Activated naive CD4-positive, alpha-beta T cell treated with anti-CD3 and anti-CD28 coated beads, Interleukin-2, amount 10 ng/mL, durations not matched to agents 7 days and 5 days (primary cell): ENCODE measurements at regions of chr4 and their contacts with region 1.

Region 1: DNA sequence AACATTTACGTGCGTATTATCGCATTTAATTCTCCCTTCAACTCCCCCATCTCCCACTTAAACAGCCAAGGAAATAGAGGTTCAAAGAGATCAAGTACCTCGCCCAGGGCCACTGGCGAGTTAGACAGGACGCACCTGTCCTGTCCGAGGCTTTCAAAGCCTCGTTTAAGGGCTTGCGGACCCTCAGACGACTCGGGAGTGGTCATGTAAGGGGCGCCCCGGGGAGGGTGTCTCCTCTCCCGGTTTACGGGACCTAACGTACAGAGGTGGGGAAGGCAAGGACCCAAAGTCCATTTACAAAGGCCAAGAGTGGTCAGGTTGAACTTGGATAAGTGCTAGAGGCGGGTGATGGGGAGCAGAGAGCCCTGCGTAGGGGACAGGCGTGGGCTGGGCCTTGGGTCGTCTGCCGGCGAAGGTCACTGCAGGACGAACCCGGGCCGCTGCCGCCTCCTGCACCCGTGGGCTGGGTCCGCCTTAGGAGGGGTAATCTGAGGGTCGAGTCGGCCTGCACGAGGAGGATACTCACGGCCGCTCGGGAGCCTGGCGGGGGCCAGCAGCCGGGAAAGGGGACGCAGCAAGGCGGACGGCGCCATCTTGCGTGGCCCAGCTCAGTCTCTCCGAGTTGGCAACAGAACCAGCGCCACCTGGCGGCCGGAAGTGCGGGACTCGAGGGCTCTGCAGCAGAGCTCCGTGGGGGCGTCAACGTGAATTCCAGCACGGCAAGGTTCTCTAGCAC is 5.9 kb upstream of the NAA15 start:
- DNase-seq: peak; percentile 99
- H3K4me3 Mint-ChIP-seq: peak overlapping the region; percentile 82
- H3K27ac Mint-ChIP-seq: peak overlapping the region; percentile 91
- H3K4me1 Mint-ChIP-seq: peaks cover 34% of the 10 kb centered on the region
- H3K27me3 Mint-ChIP-seq: no peaks in the 10 kb centered on the region

Region 2: DNA sequence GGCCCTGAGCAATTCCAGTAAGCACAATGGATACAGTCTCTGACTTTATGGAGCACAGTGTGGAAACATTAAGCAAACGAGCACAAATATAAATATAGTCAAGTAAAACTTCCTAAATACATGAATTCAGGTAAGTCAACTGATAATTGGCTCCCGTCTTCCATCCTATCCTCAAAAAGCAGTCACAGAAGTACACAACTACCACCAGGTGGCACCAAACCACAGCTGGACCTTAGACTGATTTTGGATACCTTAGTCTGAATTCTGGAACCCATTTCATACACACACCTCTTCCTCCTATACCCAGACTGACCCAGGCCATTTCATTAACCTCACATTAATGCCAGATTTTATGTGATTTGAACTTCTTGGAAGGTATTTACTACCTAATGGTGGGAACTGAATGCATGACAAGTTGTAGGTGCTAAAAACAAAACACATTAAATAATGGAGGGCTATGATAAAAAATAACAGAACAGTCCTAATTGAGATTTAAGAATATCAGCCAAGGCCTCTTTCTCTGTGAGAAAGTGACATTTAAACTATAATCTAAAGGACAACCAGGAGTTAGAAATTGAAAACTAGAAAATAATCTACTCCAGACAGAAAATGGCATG is 195.9 kb before region 1 on chr4:
- CTCF ChIA-PET with region 1: interaction called, 36 read pairs
- DNase-seq: peak; percentile 82
- H3K4me3 Mint-ChIP-seq: no peak overlapping the region
- H3K27ac Mint-ChIP-seq: no peak overlapping the region
- H3K4me1 Mint-ChIP-seq: no peaks in the 10 kb centered on the region
- H3K27me3 Mint-ChIP-seq: no peaks in the 10 kb centered on the region

Region 3: DNA sequence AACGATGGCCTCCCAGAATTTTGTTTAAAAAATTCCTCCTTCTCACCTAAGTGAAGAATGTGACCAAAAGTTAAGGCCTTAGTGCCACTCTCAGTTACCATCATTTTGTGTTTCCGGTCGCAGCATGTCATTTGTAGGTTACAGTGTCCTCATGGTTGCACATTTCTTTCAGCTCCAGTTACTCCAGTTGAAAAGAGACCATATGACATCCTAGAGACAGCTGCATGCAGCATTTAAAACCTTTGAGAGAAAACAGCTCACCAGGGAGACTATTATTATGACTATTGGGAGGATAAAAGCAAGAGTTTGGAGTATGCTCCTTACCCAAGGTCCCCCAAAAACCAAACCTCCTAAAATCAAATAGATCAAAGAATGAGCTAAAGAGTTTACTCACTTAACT is 61.1 kb before region 1 on chr4:
- CTCF ChIA-PET with region 1: interaction called, 18 read pairs
- DNase-seq: no peak
- H3K4me3 Mint-ChIP-seq: no peak overlapping the region
- H3K27ac Mint-ChIP-seq: no peak overlapping the region
- H3K4me1 Mint-ChIP-seq: peaks cover 2% of the 10 kb centered on the region
- H3K27me3 Mint-ChIP-seq: no peaks in the 10 kb centered on the region

Region 4: DNA sequence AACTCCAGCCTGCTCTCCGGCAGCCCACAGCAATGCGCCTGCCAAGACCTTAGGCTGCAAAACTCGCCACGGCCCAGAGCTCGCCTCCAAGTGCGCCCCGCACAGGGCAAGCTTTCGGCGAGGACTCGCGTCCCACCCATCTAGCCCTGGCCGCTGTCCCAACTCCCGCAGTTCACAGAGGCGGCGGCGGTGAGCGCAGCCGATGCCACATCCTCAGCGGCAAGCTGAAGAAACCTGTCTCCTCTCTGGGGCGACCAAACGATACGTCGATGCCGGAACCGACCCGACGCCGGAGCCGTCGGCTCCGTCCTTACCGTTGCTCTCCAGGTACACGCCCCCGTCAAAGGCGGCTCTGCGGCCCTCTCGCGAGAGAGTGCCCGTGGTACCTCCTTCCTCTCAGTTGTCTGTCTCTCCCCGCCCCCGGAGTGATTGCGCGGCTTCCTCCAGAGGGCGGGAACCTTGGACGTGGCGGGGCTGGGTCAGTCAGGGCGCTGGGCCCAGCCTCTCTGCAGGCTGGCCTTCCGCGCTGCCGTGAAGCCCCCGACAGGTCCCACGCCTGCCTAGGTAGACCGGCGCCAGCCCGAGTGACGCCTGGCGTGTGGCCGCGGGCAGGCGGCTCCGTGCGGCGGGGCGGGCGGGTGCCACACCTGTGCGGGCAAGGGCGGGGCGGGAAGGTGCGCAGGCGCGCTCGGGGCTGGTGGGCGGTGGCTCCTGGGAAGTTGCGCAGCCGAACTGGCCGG is 158.2 kb after region 1 on chr4:
- CTCF ChIA-PET with region 1: no interaction called
- DNase-seq: peak; percentile 98
- H3K4me3 Mint-ChIP-seq: peak overlapping the region; percentile 86
- H3K27ac Mint-ChIP-seq: peak overlapping the region; percentile 99
- H3K4me1 Mint-ChIP-seq: peaks cover 61% of the 10 kb centered on the region
- H3K27me3 Mint-ChIP-seq: no peaks in the 10 kb centered on the region